ENCODE measurements at regions of chr22 and their contacts with region 1.

Region 1: GRCh38 chr22:34301569-34301968 is 381.3 kb upstream of the LARGE1 start:
- DNase-seq: no peak
- ATAC-seq: no peak

Region 2: GRCh38 chr22:34243023-34243422 is 58.5 kb before region 1 on chr22:
- intact Hi-C with region 1: loop called in 1 of 2 experiments (anchors 10 kb)
- DNase-seq: no peak
- ATAC-seq: peak in 1 of 2 donors; percentile 44

Measured in left cardiac atrium (tissue), 4 donors.